ENCODE measurements at regions of chr16 and their contacts with region 1.

Region 1: DNA sequence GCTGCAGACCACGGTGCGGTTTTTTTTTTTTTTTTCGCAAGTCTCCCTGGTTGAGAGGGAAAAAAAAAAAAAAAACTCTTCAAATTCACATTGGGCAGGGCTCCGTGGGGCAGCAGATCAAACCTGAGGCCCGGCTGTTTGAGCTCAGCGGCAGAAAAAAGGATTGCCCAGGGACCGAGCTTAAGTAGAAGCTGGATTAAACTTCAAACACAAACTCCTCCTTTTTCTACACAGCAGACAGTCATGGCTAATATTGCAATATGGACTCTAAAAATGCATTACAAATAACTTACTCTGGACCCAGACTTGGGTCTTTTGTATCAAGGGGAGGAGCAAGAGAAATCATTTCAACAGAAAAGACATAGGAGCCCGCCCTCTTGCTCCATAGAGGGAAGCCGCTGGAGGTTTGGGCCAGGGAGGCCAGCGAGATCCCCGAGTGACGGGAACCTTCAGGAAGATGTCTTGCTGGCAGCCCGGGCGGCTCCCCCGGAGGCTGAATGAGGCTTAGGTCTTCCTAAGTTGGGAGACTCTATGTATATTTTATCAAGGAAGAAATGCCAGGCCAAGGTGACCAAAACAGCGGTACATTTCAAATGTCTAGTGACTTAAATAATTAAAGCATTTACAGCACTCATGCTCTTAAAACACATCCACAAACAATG is 167.7 kb downstream of the ZNF423 start:
- DNase-seq: no peak
- ATAC-seq: no peak
- H3K4me3 ChIP-seq: no peak overlapping the region
- H3K27ac ChIP-seq: no peak overlapping the region
- H3K4me1 ChIP-seq: no peaks in the 10 kb centered on the region
- H3K27me3 ChIP-seq: peaks cover 22% of the 10 kb centered on the region; the same call in 1 of the 2 replicates
- CTCF ChIP-seq: 0 out of 6 replicates have a peak, but pooled peaks of 1 of the 3 experiments have one; percentile 6
- POLR2A ChIP-seq: no peak
- RAD21 ChIP-seq: no peak

Region 2: DNA sequence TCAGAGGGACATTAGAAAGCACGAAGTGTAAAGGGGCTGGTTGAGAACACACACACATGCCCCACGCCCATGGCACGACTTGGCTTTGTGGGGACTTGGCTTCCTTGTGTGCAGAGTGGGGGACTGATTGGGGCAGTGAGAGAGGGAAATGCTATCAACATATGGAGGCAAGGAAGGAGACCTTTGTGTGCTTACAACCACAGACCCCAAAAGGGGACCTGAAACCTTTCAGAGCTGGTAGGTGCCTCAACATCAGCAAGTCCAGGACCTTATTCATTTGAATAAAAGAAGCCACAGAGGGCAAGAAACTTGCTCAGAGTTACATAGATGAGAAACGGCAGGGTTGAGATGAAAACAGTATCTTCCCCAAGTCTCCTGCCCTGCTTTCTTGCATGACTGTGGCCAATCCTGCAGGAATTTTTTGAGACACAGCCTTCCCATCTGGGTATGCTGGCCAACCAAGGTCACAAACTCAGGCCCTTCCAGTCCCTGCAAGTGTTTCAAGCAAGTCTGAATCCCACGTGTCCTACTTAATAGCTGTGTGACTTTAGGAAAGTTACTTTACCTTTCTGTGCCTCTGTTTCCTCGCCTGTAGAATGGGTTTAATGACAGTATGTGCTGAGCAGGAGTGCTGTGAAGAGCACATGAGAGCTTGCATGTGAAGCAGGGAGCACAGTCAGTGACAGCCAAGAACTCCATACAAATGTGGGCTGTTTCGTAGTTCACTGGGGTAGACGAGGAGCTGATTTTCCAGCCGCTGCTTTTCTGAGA is 288.4 kb before region 1 on chr16:
- CTCF ChIA-PET with region 1: no interaction called
- POLR2A ChIA-PET with region 1: no interaction called
- RAD21 ChIA-PET with region 1: no interaction called
- intact Hi-C with region 1: loop called (anchors 10 kb)
- DNase-seq: no peak
- ATAC-seq: no peak
- H3K4me3 ChIP-seq: no peak overlapping the region
- H3K27ac ChIP-seq: no peak overlapping the region
- H3K4me1 ChIP-seq: no peaks in the 10 kb centered on the region
- H3K27me3 ChIP-seq: peaks cover 39% of the 10 kb centered on the region
- CTCF ChIP-seq: no peak
- POLR2A ChIP-seq: no peak
- RAD21 ChIP-seq: no peak

Measured in HCT116 (cell line).